Ascending aorta (tissue), 2 donors: ENCODE measurements at regions of chr2 and their contacts with region 1.

Region 1: DNA sequence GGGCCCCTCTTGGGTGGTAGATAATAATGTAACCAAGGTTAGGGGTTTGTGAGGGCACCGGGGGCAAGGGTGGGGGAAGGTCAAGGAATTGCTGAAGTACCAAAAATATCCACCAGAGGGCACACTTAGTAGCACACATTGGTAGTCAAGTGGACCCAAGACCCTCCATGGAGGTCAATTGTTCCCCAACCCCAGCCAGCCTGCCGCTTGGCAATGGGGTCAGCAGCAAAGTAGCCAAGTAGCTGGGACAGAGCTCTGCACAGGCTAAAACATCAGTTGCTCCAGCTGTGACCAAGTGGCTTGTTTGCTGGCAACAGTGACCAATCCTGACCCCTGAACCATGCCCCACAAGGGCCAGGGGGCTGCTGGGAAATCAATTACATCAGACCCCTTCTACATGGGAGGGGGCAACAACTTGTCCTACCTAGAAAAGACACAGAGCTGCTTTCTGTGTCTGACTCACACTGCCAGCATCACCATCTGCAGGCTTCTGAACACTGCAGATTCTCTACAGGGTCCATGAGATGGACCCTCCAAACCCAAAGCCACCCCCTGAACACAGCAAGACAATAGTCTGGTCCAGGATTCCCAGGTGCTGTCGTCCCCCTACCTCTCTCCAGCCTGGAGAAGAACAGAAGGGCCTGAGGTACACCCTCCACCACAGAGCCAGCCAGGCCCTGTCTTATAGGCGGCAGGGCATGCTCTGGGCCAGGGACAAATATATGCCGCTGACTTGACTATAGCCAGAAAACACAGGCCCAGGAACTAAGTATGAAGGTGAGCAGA is 76.0 kb downstream of the EMX1 start:
- DNase-seq: peak in 1 of 2 donors; percentile 64
- H3K4me3 ChIP-seq: no peak overlapping the region
- H3K27ac ChIP-seq: no peak overlapping the region
- H3K4me1 ChIP-seq: no peaks in the 10 kb centered on the region
- H3K27me3 ChIP-seq: no peaks in the 10 kb centered on the region
- CTCF ChIP-seq: peak; percentile 80 to 85 (median 82)

Region 2: DNA sequence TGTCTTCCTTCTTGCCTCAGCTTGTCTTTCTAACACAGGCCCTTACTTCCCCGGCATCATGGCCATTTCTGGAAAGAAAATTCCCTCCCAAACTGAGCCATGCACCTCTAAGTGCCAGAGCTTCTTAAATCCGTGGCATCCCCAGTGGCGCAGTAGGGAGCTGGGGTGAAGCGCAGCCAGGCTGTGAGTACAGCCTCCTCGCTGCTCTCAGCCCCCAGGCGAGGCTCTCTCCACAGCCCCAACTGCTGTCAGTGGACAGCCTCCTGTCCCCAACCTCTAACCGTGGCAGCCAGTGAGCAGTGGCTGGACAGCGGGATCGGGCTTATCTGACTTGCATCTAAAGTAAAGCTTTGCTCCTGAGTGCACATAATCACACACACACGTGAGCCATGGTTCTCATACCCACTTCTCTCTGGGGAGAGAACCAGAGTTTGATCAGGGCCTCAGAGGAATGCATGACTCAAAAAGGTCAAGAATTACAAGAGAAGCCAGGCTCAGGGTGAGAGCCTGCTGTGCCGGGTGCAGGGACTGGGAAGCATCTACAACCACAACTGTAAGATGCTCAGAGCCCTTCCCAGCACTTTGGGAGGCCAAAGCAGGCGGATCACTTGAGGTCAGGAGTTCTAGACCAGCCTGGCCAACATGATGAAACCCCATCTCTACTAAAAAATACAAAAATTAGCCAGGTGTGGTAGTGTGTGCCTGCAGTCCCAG is 27.5 kb after region 1 on chr2:
- intact Hi-C with region 1: no loop called
- DNase-seq: no peak
- H3K4me3 ChIP-seq: no peak overlapping the region
- H3K27ac ChIP-seq: peak overlapping the region in 1 of 2 donors; percentile 66
- H3K4me1 ChIP-seq: peaks cover 0 to 17% of the 10 kb centered on the region in 2 donors
- H3K27me3 ChIP-seq: no peaks in the 10 kb centered on the region
- CTCF ChIP-seq: no peak

Region 3: GRCh38 chr2:73033766-73034381 is 40.5 kb after region 1 on chr2:
- intact Hi-C with region 1: loop called (anchors 5 kb)
- DNase-seq: no peak
- H3K4me3 ChIP-seq: no peak overlapping the region
- H3K27ac ChIP-seq: no peak overlapping the region
- H3K4me1 ChIP-seq: no peaks in the 10 kb centered on the region
- H3K27me3 ChIP-seq: no peaks in the 10 kb centered on the region
- CTCF ChIP-seq: no peak

Region 4: GRCh38 chr2:73156539-73157124 is 163.3 kb after region 1 on chr2:
- intact Hi-C with region 1: loop called (anchors 2 kb)
- DNase-seq: peak in 1 of 2 donors; percentile 79
- H3K4me3 ChIP-seq: peak overlapping the region in 1 of 2 donors; percentile 5
- H3K27ac ChIP-seq: no peak overlapping the region
- H3K4me1 ChIP-seq: peaks cover 0 to 6% of the 10 kb centered on the region in 2 donors
- H3K27me3 ChIP-seq: no peaks in the 10 kb centered on the region
- CTCF ChIP-seq: peak; percentile 78 to 91 (median 80)

Region 5: DNA sequence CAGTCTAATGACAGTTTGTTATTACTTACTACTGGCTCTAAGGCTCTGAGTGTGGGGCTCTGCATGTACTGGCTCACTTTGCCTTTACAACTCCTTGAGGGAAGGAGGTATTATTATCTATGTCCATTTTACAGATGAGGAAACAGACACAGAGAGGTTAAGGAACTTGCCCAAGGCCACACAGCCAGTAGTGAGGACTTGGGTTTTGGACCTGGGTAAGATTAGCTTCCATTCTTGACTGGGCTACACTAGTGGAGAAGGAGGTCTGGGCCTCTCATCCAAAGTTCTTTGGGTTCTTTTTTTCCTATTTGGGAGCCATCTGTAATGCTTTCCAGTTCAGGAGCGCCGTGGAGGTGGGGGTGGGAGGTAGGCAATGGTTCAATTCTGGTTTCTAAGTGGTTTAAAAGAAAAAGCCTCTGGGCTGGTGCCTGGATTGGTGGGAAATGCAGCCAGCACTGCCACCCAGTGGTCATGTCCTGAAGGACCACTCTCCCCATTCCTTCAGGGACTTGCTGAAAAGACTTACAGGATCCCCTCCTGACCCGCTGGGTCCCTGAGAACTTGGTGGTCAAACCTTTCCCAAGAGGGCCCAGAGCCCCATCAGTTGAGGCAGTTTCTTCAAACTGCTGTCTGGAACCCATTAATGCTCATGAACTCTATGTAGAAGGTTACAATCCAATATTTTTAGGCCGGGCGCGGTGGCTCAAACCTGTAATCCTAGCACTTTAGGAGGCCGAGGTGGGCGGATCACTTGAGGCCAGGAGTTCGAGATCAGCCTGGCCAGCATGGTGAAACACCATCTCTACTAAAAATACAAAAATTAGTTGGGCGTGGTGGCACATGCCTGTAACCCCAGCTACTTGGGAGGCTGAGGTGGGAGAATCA is 170.4 kb after region 1 on chr2:
- intact Hi-C with region 1: loop called (anchors 2 kb)
- DNase-seq: peak in 1 of 2 donors; percentile 83
- H3K4me3 ChIP-seq: no peak overlapping the region
- H3K27ac ChIP-seq: no peak overlapping the region
- H3K4me1 ChIP-seq: no peaks in the 10 kb centered on the region
- H3K27me3 ChIP-seq: no peaks in the 10 kb centered on the region
- CTCF ChIP-seq: peak; percentile 75 to 86 (median 81)

Region 6: DNA sequence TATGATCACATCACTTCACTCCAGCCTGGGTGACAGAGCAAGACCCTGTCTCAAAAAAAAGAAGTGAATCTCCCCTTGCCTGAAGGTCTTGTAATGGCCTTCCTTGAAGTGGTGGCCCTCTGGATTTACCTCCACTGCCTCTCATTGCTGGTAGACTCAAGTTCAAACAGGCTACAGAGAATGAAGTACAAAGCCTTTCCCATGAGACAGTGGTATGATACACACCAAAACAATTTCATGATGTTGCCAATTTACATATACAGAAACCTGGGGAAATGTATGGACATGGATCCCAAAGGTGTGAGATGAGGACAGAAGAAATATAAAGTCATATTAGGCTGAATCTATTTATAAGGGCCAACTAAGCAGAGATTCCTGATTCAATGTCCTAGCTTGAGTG is 204.2 kb after region 1 on chr2:
- intact Hi-C with region 1: no loop called
- DNase-seq: no peak
- H3K4me3 ChIP-seq: no peak overlapping the region
- H3K27ac ChIP-seq: no peak overlapping the region
- H3K4me1 ChIP-seq: peaks cover 0 to 4% of the 10 kb centered on the region in 2 donors
- H3K27me3 ChIP-seq: peaks cover 15% of the 10 kb centered on the region
- CTCF ChIP-seq: no peak